Activated naive CD4-positive, alpha-beta T cell treated with anti-CD3 and anti-CD28 coated beads for 36 hours (primary cell): ENCODE measurements at regions of chr18 and their contacts with region 1.

Region 1: DNA sequence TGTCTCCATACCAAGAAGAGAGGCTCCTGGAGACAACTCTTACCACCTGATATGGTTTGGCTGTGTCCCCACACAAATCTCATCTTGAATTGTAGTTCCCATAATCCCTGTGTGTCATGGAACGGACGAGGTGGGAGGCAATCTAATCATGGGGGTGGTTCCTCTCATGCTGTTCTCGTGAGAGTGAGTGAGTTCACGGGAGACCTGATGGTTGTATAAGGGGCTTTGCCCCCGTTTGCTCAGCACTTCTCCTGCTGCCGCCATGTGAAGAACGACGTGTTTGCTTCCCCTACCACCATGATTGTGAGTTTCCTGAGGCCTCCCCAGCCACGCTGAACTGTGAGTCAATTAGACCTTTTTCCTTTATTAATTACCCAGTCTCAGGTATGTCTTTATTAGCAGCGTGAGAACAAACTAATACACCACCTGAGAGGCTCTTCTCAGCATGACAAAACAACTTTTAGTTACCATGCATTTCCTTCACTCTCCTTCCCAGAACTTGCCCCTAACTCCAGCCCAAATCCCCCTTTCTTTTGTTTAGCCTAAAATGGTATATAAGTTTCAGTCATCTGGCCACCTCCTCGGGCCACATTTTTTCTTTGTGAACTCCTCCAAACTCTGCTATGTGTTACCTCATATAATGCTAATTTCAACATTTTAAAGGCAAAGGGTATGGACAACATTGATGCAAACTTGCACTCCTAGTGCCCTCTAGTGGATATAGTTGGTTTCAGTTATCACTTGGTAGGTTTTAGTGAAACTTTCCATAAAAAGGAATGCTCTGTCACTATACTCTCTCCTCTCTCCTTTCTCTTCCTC is 58.6 kb upstream of the SLC25A52 start:
- DNase-seq: no peak
- H3K4me3 Mint-ChIP-seq: no peak overlapping the region
- H3K27ac Mint-ChIP-seq: no peak overlapping the region
- H3K4me1 Mint-ChIP-seq: no peaks in the 10 kb centered on the region
- H3K27me3 Mint-ChIP-seq: no peaks in the 10 kb centered on the region

Region 2: GRCh38 chr18:30971338-30971956 is 847.9 kb before region 1 on chr18:
- CTCF ChIA-PET with region 1: no interaction called
- intact Hi-C with region 1: loop called (anchors 1 kb)
- DNase-seq: no peak
- H3K4me3 Mint-ChIP-seq: no peak overlapping the region
- H3K27ac Mint-ChIP-seq: no peak overlapping the region
- H3K4me1 Mint-ChIP-seq: no peaks in the 10 kb centered on the region
- H3K27me3 Mint-ChIP-seq: peaks cover 4% of the 10 kb centered on the region

Region 3: DNA sequence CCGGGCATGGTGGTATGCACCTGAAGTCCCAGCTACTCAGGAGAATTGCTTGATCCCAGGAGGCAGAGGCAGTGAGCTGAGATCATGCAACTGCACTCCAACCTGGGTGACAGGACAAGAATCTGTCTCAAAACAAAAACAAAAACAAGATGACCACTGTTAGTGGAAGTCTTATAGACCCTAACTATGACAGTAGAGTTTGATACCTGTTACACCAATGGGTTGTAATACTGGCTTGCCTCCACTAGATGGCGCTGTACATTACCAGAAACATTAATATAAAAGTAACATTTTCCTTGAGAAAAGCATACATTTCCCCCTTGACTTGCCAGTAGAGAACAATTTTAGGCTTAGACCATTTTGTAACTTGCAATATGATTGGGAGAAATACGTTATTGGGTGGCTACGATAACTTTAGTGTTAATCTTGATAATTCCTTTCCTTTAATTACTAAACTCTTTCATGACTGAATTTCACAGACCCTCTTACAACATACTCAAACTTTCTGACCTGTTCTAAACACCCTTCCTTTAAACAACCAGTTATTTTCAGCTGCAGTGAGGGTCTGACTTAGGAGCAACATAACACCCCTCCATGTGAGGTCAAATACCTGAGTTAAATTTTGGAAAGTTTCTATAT is 78.1 kb before region 1 on chr18:
- CTCF ChIA-PET with region 1: interaction called, 5 read pairs
- intact Hi-C with region 1: loop called (anchors 1 kb)
- DNase-seq: peak; percentile 78
- H3K4me3 Mint-ChIP-seq: no peak overlapping the region
- H3K27ac Mint-ChIP-seq: no peak overlapping the region
- H3K4me1 Mint-ChIP-seq: no peaks in the 10 kb centered on the region
- H3K27me3 Mint-ChIP-seq: no peaks in the 10 kb centered on the region

Region 4: DNA sequence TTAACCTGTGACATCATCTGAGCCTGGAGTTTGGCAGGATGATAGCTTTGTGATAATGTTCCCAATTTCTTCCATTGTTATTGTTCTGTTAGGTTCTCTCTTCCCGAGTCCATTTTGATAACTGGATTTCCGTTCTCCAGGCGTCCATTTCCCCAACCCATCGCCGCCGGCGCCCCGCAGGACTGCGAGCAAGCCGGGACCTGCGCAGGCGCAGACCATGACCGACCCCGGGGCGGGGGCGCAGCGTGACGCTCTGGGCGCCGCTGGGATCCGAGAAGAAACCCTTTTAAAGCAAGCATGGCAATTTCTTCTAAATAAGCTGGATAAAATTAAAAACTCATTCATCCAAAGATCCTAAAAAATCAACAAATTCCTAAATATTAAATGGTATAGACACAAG is 58.6 kb before region 1 on chr18 and contains the start of gene SLC25A52:
- CTCF ChIA-PET with region 1: no interaction called
- intact Hi-C with region 1: no loop called
- DNase-seq: no peak
- H3K4me3 Mint-ChIP-seq: no peak within 1 kb of the TSS
- H3K27ac Mint-ChIP-seq: no peak within 1 kb of the TSS
- H3K4me1 Mint-ChIP-seq: no peaks in the 10 kb centered on the region
- H3K27me3 Mint-ChIP-seq: no peaks in the 10 kb centered on the region
- total RNA-seq, gene SLC25A52: not detected

Region 5: DNA sequence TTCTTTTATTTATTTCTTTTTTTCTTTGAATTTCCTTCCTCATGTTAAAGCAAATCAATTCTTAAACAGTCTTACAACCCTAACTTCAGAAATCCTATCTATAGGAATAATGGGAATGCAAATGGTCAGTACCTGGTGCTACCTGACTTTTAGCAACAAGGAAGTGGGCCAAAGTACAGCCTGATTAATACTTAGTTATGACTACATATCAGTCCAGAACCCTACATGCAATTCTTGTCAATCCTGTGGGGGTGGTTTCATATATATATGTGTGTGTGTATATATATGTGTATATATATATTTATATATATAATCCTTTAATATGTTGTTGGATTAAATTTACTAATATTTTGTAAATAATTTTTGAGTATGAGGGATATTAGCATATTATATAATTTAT is 138.4 kb after region 1 on chr18:
- CTCF ChIA-PET with region 1: interaction called, 4 read pairs
- intact Hi-C with region 1: loop called (anchors 1 kb)
- DNase-seq: no peak
- H3K4me3 Mint-ChIP-seq: no peak overlapping the region
- H3K27ac Mint-ChIP-seq: no peak overlapping the region
- H3K4me1 Mint-ChIP-seq: no peaks in the 10 kb centered on the region
- H3K27me3 Mint-ChIP-seq: no peaks in the 10 kb centered on the region

Region 6: DNA sequence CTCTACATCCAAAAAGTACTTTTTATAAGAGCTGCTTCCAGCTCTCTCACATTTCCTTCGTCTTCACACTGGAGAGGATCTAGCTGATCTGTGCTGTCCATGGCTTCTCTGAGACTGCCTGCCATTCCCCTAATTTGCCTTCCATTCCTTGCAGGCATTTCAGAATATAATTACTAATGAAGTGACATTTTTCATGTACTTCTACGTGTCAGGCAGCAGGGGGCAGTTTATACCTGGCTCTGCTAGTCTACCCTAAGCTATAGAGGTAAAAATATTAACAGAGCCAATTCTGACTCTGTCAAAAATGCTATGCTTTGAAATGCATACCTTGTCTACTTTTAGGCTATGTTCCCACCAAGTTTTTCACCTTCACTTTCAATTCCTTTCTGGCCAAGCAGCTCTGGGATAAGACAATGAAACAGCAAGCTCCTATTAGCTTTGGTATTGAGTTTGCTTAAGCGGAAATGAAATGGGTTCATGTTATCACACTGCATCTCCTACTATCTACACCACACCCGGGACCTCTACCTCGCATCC is 452.4 kb after region 1 on chr18:
- CTCF ChIA-PET with region 1: no interaction called
- intact Hi-C with region 1: no loop called
- DNase-seq: peak; percentile 44
- H3K4me3 Mint-ChIP-seq: no peak overlapping the region
- H3K27ac Mint-ChIP-seq: no peak overlapping the region
- H3K4me1 Mint-ChIP-seq: no peaks in the 10 kb centered on the region
- H3K27me3 Mint-ChIP-seq: peaks cover 11% of the 10 kb centered on the region